ENCODE measurements at regions of chr6 and their contacts with region 1.

Region 1: DNA sequence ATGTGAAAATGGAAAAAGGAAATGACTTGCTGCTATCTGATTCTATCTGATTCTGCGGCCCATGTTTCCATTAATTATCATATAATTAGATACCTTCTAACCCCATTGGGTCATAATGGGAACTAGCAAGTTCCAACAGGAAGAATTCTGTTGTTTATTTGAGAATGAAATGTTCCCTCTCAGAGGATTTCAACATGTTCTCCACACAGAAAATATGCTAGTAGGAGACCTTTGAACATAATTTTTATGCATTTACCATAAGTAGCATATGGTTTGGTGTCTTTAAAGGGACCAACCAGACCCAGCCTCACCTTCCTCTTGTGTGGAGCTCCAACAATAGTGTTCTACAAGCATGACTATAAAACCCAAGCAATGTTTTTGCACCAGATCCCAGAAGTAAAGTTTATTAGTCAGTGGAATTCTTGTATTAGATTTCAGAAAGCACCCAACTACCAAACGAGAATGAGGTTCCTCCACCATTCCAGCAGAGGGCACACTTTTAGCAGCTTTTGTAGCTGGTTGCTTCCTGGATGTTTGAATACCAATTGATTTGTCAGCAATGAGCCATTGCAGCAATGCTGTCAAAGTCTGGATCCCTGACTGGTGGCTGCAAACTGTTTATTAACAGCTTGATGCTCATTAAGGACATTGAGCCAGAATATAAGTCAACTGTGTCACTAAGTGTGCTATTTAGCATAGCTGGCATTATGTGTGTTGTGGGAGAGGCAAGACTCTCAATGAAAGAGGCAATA is 143.6 kb upstream of the GJE1 start:
- DNase-seq: peak; percentile 60
- H3K4me3 Mint-ChIP-seq: no peak overlapping the region
- H3K27ac Mint-ChIP-seq: no peak overlapping the region
- H3K4me1 Mint-ChIP-seq: peaks cover 10% of the 10 kb centered on the region
- H3K27me3 Mint-ChIP-seq: no peaks in the 10 kb centered on the region
- CTCF ChIP-seq: peak; percentile 59

Region 2: GRCh38 chr6:142045380-142046278 is 56.5 kb after region 1 on chr6:
- CTCF ChIA-PET with region 1: interaction called, 3 read pairs
- intact Hi-C with region 1: loop called (anchors 1 kb)
- DNase-seq: no peak
- H3K4me3 Mint-ChIP-seq: no peak overlapping the region
- H3K27ac Mint-ChIP-seq: no peak overlapping the region
- H3K4me1 Mint-ChIP-seq: peaks cover 7% of the 10 kb centered on the region
- H3K27me3 Mint-ChIP-seq: no peaks in the 10 kb centered on the region
- CTCF ChIP-seq: no peak

Region 3: DNA sequence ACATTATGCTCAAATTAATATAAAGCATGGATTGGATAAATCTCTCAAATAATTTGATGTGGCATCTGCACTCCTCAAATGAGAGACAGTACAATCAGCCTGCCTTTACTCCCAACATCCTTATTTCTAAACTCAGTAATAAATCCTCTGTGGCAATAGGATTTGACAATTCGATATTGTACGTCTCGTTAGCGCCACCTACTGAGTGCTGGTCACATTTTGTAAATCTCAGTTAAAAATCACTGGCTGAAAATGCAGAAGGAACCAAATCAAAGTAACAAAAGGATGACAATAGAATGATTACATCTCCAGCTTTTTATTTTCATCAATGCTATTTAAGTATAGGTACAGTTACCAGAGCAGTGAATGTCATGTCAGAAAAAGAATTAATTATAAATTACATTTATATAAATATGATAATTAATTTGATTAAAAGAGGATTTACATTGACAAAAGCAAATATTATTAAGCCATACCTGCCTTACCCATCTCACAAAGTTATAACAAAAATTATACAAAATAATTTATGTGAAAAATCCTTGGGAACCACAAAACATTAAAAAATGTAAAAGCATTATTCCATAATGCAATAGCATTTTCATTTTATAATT is 123.4 kb after region 1 on chr6:
- CTCF ChIA-PET with region 1: no interaction called
- intact Hi-C with region 1: loop called (anchors 1 kb)
- DNase-seq: peak; percentile 70
- H3K4me3 Mint-ChIP-seq: no peak overlapping the region
- H3K27ac Mint-ChIP-seq: no peak overlapping the region
- H3K4me1 Mint-ChIP-seq: no peaks in the 10 kb centered on the region
- H3K27me3 Mint-ChIP-seq: no peaks in the 10 kb centered on the region
- CTCF ChIP-seq: peak; percentile 38